Colonic mucosa (tissue), 4 donors: ENCODE measurements at regions of chr3 and their contacts with region 1.

Region 1: DNA sequence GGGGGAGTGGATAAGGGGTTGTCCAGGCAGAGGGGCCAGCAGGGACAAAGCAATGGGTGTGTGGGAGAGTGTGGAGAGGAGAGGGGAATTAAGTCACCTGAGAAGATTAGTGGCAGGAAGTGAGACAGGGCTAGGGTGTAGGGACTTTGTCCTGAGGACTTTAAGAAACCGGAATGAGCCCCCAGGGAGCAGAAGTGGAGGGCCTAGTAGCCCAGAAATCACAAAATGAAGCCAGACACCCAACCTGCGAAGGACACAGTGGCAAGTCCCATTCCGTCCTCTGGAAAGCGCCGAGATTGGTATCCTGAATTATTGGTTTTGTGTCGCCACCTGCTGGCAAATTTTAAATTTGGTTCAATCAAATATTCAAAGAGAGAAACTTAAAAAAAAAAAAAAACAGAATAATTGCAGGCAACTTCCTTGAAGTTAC is 78.0 kb upstream of the SLC25A36 start:
- DNase-seq: peak; percentile 69
- H3K4me3 ChIP-seq: no peak overlapping the region
- H3K27ac ChIP-seq: no peak overlapping the region
- H3K4me1 ChIP-seq: no peaks in the 10 kb centered on the region
- H3K27me3 ChIP-seq: no peaks in the 10 kb centered on the region
- CTCF ChIP-seq: peak; percentile 36

Region 2: DNA sequence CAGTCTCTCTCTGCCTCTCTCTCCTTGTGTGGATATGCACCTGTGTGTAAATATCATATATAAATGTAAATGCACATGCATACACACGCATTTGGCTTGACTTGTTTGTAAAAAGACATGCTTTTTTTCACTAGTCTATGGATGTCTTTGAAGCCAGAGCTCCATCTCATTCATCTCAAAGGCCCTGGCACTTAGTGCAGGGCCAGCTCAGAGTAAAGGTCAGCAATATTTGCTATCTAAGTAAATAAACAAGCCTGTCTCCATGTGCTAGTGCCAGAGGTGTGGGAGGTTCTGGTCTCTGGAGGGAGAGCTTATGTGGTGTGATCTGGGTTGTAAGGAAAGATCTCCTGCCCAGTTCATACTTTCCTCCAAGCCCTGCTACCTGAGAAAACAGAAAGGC is 923.0 kb before region 1 on chr3:
- intact Hi-C with region 1: loop called (anchors 10 kb)
- DNase-seq: no peak
- H3K4me3 ChIP-seq: no peak overlapping the region
- H3K27ac ChIP-seq: no peak overlapping the region
- H3K4me1 ChIP-seq: peaks cover 2% of the 10 kb centered on the region
- H3K27me3 ChIP-seq: peaks cover 18% of the 10 kb centered on the region
- CTCF ChIP-seq: no peak